ENCODE measurements at regions of chr18 and their contacts with region 1.

Region 1: DNA sequence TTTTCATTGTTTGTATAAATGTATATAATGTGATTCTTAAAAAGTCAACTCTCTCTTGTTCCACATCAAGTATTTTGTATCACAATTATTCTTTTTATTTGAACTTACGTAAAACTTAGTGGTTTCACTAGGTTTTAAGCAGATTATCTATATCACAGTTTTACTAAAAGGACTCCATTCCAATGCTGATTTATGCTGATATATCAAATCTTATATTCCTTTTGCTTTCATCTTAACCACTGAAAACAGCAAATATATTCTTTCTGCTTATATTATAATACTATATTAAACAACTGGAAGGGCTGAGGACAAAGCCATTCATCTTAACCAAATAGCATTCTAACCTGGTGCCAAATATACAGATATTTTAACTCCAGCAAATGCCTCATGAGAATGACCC is 24.2 kb downstream of the TRAPPC8 start:
- DNase-seq: no peak
- H3K4me3 ChIP-seq: no peak overlapping the region
- H3K27ac ChIP-seq: no peak overlapping the region
- H3K4me1 ChIP-seq: no peaks in the 10 kb centered on the region
- H3K27me3 ChIP-seq: no peaks in the 10 kb centered on the region
- CTCF ChIP-seq: no peak
- POLR2A ChIP-seq: no peak

Region 2: DNA sequence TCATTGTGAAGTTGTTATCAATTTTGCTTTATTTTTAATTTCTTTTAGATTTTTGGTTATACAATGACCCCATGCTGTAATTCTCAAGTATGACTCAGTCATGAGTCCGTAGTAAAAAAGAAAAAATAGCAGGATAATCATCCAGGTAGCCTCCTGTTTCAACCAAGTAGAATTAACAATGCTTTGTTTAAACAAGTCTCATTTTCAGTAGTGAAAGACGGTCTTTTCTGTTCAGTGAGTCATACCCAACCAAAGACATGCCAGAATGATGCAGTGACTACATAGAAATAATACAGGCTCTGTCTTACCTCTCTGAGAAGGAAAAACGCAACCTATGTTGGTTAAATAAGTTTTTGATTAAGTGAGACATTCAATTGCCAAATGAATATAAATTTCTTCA is 688.2 kb before region 1 on chr18:
- intact Hi-C with region 1: loop called (anchors 10 kb)
- DNase-seq: no peak
- H3K4me3 ChIP-seq: no peak overlapping the region
- H3K27ac ChIP-seq: no peak overlapping the region
- H3K4me1 ChIP-seq: no peaks in the 10 kb centered on the region
- H3K27me3 ChIP-seq: no peaks in the 10 kb centered on the region
- CTCF ChIP-seq: no peak
- POLR2A ChIP-seq: no peak

Measured in prostate gland (tissue), 2 donors.